Esophagus muscularis mucosa (tissue), 4 donors: ENCODE measurements at regions of chr3 and their contacts with region 1.

Region 1: GRCh38 chr3:9399746-9400145 is 2.3 kb downstream of the SETD5 start:
- DNase-seq: no peak
- H3K4me3 ChIP-seq: peak overlapping the region; percentile 86 to 92 (median 90)
- H3K27ac ChIP-seq: peak overlapping the region; percentile 98 to 100 (median 99)
- H3K4me1 ChIP-seq: peaks cover 62 to 75% (median 71%) of the 10 kb centered on the region in 4 donors
- H3K27me3 ChIP-seq: no peaks in the 10 kb centered on the region
- CTCF ChIP-seq: peak in 1 of 3 experiments; percentile 11
- EP300 ChIP-seq: no peak
- POLR2A ChIP-seq: no peak

Region 2: DNA sequence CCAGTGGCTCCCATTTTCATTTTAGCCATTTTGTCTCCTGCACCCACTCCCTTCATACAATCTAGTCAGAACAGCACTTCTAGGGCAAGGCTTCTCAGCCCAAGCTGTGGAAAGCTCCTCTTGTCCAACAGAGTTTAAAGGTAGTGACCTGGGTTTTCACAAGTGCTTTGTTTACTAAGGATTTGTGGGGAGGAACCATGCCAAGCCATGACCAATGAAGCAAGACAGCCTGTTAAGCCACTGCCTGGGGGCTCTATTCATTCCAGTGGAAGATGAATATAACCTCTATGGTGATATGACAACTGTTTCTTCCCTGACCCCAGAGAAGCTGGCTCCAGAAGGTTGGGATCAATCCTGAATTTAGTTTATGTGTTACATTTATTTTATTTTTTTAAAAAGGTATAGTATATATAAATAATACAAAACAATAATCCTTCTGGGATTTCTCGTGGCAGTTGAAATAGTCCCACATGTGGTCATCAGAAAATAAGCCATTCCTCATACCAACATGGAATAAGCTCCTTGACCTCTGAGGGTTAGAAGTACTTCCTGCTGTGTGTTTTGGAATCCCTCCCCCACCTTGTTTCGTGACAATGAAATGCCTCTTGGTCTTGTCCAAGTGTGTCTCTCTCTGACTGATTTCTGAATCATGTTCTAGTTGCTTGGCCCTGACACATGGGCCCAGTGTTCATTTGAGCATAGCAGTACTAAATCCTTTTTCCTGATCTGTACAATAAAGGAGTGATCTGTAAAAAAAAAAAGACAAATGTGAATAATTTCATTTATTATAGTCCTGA is 50.2 kb before region 1 on chr3:
- intact Hi-C with region 1: no loop called
- DNase-seq: no peak
- H3K4me3 ChIP-seq: no peak overlapping the region
- H3K27ac ChIP-seq: no peak overlapping the region
- H3K4me1 ChIP-seq: peaks cover 3 to 9% (median 7%) of the 10 kb centered on the region in 4 donors
- H3K27me3 ChIP-seq: no peaks in the 10 kb centered on the region
- CTCF ChIP-seq: no peak
- EP300 ChIP-seq: no peak
- POLR2A ChIP-seq: no peak

Region 3: GRCh38 chr3:9362731-9363530 is 36.8 kb before region 1 on chr3 and contains the start of gene THUMPD3:
- intact Hi-C with region 1: no loop called
- DNase-seq: peak; percentile 97
- H3K4me3 ChIP-seq: peak within 1 kb of the TSS; percentile 69 to 78 (median 76)
- H3K27ac ChIP-seq: peak within 1 kb of the TSS; percentile 84 to 93 (median 92)
- H3K4me1 ChIP-seq: peaks cover 17 to 31% (median 25%) of the 10 kb centered on the region in 4 donors
- H3K27me3 ChIP-seq: no peaks in the 10 kb centered on the region
- CTCF ChIP-seq: no peak
- EP300 ChIP-seq: peak; percentile 28
- POLR2A ChIP-seq: peak; percentile 63
- total RNA-seq, gene THUMPD3: 23.8 to 37.4 (median 26.1) TPM

Region 4: DNA sequence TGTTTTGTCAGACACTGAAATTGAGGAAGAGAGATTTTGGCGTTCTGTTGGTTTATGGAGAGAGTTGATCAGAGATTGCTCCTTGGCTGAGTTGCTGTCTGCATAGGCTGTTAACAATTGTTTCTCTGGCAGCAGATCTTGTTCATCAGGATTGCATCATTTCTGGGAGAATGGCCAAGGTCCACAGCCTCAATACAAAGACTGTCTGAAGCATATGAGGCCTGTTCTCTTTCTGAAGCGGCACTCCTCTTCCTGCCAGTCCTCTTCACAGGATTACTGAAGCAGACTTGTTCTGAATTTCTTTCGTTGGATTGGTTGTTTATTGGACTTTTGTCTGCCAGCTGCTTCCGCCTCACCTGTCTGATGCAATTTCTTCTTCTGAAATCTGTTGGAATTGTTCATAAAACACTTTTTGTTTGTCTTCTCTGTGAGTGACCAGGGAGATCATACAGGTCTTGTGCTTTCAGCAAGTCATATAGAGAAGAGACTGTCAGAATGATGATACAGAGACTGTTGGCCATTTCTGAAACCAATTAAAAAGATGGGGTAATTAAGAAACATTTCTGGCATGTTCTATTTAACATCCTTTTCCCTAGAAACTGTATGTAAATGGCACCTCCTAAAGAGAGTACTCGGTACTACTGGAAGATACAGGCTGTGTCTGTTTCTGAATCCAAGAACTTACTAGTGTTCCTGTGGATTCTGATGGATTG is 23.1 kb after region 1 on chr3:
- intact Hi-C with region 1: loop called (anchors 2 kb)
- DNase-seq: peak; percentile 93
- H3K4me3 ChIP-seq: peak overlapping the region in 3 of 4 donors; percentile 13 to 19 (median 15)
- H3K27ac ChIP-seq: peak overlapping the region; percentile 83 to 87 (median 84)
- H3K4me1 ChIP-seq: peaks cover 61 to 92% (median 84%) of the 10 kb centered on the region in 4 donors
- H3K27me3 ChIP-seq: no peaks in the 10 kb centered on the region
- CTCF ChIP-seq: peak; percentile 62 to 71 (median 65)
- EP300 ChIP-seq: no peak
- POLR2A ChIP-seq: no peak